ENCODE measurements at regions of chr10 and their contacts with region 1.

Region 1: DNA sequence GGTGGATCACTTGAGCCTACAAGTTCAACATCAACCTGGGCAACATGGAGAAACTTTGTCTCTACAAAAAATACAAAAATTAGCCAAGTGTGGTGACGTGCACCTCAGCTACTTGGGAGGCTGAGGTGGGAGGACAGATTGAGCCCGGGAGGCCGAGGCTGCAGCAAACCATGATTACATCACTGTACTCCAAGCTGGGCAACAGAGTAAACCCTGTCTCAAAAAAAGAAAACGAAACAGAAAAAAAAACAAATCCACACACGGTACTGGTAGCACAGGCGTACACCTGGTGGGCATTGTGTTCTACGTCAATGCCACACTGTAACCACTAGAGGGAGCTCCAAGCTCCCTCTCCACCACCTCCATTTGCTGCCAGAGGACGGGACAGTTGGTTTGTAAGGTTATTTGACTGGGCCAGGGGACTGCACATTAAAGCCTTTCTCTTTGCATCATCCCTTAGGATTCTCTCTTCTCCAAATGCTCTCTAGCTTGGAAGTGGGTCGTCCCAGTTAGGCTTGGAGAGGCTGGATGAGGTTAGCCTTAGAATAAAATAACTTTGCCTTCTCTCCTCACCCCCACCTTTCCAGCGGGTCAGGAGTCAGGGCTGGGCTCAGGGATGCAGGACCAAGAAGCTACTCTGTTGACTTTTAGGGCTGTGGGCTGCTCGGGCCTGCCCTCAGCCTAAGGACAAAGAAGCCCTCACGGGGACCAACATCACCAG is 130.8 kb downstream of the SORBS1 start:
- DNase-seq: peak in 4 of 10 donors; percentile 34 to 54 (median 52)

Region 2: DNA sequence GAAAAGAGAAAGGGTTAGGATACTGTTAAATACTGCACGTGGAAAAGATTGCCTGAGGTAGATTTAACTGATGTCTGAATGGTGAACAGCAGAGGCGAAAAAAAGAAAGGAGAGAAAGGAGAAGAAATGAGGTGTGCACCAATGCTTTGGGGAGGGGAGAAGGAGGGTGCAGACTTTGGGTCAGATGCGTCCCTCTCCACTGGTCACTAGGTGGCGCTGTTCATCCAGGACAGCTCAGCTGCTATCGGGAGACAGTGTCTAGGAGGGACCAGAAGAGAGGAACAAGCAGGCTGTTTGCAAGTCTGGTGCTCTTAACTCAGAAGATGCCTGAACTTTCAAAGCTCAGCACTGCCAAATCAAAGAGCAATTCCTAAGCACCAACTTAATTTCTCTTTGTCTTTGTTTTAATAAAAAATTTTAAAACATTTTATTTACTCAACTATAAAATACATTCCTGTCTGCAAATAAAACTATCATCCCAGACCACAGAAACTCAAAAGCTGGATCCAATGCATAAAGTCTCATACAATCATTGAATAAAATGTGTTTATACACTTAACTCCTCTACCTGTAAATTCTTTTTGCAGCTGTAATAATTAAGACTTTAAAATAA is 55.7 kb before region 1 on chr10:
- intact Hi-C with region 1: loop called (anchors 5 kb)
- DNase-seq: peak; percentile 65 to 97 (median 86)

Region 3: DNA sequence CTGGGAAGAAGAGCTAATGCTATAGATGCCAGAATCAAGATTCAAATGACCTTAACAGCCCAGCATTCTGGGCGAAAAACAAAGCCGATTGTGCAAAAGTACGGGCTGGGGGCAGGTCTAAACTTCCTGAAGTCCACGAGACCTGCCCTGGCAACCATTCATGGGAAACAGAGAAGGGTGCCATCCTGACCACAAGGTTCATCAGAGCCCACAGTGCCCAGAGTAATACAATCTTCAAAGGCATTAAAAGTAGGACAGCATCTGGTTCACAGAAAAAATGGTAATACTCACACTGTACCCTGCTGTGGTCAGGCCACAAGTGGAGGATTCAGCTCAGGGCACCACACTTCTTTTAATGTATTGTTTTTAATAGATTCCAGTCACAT is 94.6 kb after region 1 on chr10:
- intact Hi-C with region 1: no loop called
- DNase-seq: no peak

Region 4: DNA sequence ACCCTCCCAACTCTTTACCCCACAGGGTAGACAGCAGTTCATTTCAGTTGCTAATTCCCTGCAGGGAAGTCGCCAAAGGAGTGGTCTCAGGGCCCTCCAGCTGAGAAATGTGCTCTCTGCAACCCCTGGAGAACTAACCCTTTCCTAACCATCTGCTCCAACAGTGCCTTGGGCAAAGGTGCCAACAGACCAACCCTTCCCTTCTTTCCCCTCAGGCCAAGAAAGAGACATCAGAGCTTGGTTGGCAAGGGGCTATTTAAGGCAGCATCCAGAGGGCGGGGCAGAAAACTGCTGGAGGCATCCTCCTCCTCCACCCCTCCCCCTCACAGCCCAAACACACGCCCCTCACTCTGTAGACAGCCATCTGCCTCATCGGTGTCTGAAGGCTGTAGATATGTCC is 129.1 kb after region 1 on chr10:
- intact Hi-C with region 1: loop called (anchors 5 kb)
- DNase-seq: no peak

Region 5: DNA sequence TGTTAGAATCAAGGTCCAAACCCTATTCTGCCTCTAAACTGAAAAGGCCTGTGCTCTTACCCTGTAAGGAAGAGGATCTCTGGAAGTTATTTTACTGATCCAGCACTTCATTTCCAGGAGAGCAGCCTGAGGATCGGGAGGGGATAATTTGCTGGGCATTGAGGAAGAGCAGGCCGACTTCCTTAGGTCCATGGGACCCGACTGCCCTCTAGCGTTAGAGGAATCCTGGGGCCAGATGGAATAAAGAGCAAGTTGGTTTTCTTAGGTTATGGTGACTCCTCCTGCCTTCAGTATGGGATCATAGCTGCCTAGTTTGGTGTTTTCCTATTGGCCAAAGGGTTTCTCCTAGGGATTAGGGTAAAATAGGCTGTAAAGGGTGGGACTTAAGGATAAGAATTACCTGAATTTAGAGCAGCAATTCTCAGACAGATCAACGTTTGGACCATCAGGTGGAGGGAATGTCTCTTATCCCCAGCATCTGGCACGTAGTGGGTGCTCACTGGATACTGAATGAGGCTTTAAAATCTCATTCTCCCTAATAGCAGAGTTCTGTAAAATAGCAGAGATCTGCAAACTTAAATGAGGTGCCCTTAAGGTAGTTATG is 170.8 kb after region 1 on chr10:
- intact Hi-C with region 1: loop called (anchors 1 kb)
- DNase-seq: peak; percentile 45 to 95 (median 76)

Measured in posterior cingulate gyrus (tissue), 11 donors.